Calu3 (cell line): ENCODE measurements at regions of chr11 and their contacts with region 1.

Region 1: DNA sequence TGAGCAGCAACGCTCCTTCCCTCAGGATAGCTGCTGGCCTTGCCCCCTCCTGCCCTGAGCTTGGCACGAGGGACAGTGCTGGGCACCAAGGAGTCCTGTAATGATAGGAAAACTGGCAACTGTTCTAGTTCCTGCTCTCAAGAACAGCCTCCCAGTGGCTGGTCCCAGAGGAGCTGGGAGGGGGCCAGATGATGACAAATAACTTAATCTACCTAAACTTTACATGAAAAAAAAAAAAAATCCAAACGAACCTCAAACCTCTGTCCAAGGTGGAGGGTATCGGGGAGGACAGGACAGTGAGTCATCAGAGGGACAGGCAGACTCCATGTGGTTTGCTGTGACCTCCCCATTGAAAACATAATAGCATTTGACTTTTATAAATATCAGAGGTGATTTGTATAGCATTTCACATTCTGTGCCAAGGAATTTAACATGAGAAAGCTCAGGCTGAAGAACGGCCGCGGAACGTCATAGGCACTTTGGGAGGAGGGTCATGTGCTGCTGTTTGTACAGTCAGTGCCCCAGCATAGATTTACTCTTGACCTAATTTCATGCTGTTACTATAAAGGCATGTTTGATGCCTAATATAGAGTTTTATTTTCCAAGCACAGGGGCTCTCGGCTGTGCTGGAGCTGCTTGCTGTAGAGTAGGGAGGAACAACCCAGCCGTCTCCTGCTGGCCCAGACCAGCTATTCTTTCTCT is 98.2 kb upstream of the NNMT start:
- DNase-seq: peak; percentile 47
- H3K4me3 Mint-ChIP-seq: no peak overlapping the region
- H3K27ac Mint-ChIP-seq: peak overlapping the region; percentile 53
- H3K4me1 Mint-ChIP-seq: peaks cover 17% of the 10 kb centered on the region
- H3K27me3 Mint-ChIP-seq: peaks cover 7% of the 10 kb centered on the region
- CTCF ChIP-seq: no peak

Region 2: DNA sequence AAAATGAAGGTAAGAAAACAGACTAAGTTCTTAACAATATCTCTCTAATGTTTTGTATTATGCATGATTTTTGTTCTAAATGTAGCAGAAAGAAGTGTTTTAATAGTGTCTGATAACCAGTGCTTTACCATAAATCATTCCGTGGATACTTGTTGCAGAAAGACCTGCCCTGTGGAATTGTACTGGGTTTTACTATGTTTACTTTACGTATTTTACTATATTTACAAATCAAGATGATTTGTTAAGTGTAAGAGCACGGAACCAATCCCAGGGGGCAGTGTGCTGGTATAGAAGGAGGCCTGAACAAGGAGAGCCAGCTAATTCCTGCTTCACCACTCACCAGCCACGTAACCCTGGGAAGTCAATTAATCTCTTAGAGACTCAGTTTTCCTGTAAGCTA is 291.9 kb before region 1 on chr11:
- CTCF ChIA-PET with region 1: no interaction called
- intact Hi-C with region 1: loop called (anchors 10 kb)
- DNase-seq: no peak
- H3K4me3 Mint-ChIP-seq: no peak overlapping the region
- H3K27ac Mint-ChIP-seq: no peak overlapping the region
- H3K4me1 Mint-ChIP-seq: no peaks in the 10 kb centered on the region
- H3K27me3 Mint-ChIP-seq: peaks cover 42% of the 10 kb centered on the region
- CTCF ChIP-seq: no peak